ENCODE measurements at regions of chr7 and their contacts with region 1.

Region 1: DNA sequence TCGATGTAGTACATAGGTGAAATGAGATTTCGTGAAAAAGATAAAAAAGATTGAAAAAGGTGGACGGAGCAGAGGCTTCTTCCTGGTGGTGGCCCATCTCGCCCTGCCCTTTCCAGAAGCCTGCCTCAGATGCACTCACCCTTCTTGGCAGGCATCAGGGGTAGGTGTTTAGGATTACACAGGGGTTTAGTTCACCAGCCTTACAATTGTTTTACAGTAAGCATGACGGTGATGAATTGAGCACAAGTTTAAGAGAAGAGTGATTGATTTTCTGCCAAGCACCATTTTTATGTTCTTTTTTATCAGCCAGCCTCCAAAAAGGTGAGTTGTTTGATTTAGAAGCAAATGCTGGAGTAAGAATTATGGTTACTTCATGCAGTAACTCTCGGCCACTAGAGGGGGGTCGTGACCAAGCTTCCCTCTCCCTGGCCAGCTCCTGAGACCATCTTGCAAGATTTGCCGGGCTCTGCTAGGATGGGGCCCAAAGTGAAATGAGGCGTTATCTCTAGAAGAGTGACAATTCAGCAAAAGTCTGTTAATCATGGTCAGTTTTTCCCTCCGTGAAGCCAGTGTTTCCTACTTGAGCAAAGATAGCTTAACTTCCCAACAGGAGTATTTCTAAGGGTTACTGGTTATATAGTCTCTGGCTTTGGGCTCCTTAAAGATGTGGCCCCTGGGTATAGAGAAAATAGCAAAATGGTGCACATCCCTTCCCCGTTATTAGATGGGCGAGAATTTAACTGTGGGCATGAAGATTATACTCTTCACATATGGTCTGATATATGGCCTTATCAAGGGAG is 228.8 kb downstream of the BMPER start:
- DNase-seq: peak; percentile 66 to 82
- ATAC-seq: peak; percentile 79 to 89 (median 84)
- H3K4me3 ChIP-seq: no peak overlapping the region
- H3K27ac ChIP-seq: no peak overlapping the region
- H3K4me1 ChIP-seq: peaks cover 15% of the 10 kb centered on the region
- H3K27me3 ChIP-seq: no peaks in the 10 kb centered on the region
- CTCF ChIP-seq: peak; percentile 78

Region 2: GRCh38 chr7:34158368-34159155 is 24.4 kb after region 1 on chr7:
- intact Hi-C with region 1: loop called in 1 of 2 experiments (anchors 2 kb)
- DNase-seq: peak; percentile 76 to 85
- ATAC-seq: peak; percentile 75 to 87 (median 81)
- H3K4me3 ChIP-seq: no peak overlapping the region
- H3K27ac ChIP-seq: peak overlapping the region; percentile 84
- H3K4me1 ChIP-seq: peaks cover 33% of the 10 kb centered on the region
- H3K27me3 ChIP-seq: no peaks in the 10 kb centered on the region
- CTCF ChIP-seq: peak; percentile 42

Region 3: GRCh38 chr7:34165929-34166550 is 31.9 kb after region 1 on chr7:
- intact Hi-C with region 1: loop called (anchors 1 to 5 kb)
- DNase-seq: no peak
- ATAC-seq: peak; percentile 85 to 91 (median 88)
- H3K4me3 ChIP-seq: no peak overlapping the region
- H3K27ac ChIP-seq: peak overlapping the region; percentile 74
- H3K4me1 ChIP-seq: peaks cover 17% of the 10 kb centered on the region
- H3K27me3 ChIP-seq: no peaks in the 10 kb centered on the region
- CTCF ChIP-seq: peak; percentile 68

Region 4: DNA sequence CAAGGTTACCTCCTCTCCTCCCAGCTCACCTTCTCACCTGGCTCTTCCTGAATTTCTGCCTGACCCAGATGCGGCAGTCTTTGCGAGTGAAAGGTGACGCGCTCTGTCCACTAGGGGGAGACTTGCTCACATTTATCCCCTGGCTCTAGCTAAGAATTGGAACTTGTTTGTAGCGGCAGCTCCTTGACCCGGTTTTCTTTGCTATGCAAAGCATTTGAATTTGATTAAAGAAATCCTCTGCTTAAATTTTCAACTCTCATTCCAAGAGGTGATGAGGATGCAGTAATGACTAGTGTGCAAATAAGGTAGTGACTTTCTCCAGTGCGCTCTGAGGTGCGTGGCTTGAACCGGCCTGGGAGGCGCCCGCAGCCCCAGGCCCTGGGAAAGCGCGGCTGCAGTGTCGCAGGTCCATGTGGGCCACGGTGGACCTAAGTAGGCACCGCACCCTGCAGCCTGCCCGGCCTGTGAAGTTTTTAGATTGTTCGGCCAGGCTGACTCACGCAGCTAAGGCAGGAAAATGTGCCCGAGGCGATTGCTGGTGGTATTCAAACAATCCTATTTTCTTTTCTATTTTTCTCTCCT is 186.9 kb after region 1 on chr7:
- intact Hi-C with region 1: loop called in 1 of 2 experiments (anchors 2 kb)
- DNase-seq: peak; percentile 17 to 60
- ATAC-seq: peak in 2 of 4 donors; percentile 84 to 90
- H3K4me3 ChIP-seq: peak overlapping the region; percentile 29
- H3K27ac ChIP-seq: no peak overlapping the region
- H3K4me1 ChIP-seq: no peaks in the 10 kb centered on the region
- H3K27me3 ChIP-seq: no peaks in the 10 kb centered on the region
- CTCF ChIP-seq: peak; percentile 72